CD4-positive, alpha-beta T cell (primary cell): ENCODE measurements at regions of chr9 and their contacts with region 1.

Region 1: DNA sequence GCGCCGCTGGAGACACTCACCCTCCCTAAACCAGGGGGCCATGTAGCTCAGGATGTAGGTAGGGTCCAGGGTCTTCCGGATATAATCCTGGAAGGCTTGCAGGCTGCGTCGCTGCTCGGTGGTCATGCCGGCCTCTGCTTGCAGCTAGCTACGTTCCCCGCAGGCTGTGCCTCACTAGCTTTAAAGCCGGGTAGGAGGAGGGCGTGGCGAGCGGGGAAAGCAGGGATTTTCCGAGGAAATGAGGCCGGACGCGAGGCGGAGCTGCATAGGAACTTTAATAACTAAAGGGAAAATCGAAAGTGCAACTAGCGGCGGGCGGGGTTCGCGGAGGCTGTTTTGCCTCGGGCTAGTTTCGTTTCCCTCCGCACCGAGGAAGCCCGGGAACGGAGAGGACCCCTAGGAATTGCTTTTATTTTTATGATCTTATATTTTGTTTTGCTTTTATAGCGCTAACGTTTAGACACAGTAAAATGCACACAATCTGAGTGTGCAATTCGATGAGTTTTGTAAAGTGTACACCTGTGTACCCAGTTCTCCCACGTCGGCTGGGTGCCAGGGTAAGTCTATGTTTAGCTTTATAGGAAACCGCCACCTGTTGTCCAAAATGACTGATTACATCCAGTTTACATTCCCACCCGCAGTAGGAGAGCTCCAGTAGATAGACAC is at the start of gene RIGI:
- DNase-seq: peak; percentile 56 to 93 (median 72)
- ATAC-seq: peak; percentile 82
- H3K4me3 ChIP-seq: peak within 1 kb of the TSS; percentile 91
- H3K4me3 Mint-ChIP-seq: peak within 1 kb of the TSS; percentile 96
- H3K27ac ChIP-seq: peak within 1 kb of the TSS; percentile 83 to 91
- H3K27ac Mint-ChIP-seq: peak within 1 kb of the TSS; percentile 93
- H3K4me1 ChIP-seq: peaks cover 20% of the 10 kb centered on the region
- H3K4me1 Mint-ChIP-seq: peaks cover 57% of the 10 kb centered on the region
- H3K27me3 ChIP-seq: no peaks in the 10 kb centered on the region
- H3K27me3 Mint-ChIP-seq: no peaks in the 10 kb centered on the region
- CTCF ChIP-seq: peak; percentile 72
- total RNA-seq, gene RIGI: 4.9 to 5.0 TPM

Region 2: DNA sequence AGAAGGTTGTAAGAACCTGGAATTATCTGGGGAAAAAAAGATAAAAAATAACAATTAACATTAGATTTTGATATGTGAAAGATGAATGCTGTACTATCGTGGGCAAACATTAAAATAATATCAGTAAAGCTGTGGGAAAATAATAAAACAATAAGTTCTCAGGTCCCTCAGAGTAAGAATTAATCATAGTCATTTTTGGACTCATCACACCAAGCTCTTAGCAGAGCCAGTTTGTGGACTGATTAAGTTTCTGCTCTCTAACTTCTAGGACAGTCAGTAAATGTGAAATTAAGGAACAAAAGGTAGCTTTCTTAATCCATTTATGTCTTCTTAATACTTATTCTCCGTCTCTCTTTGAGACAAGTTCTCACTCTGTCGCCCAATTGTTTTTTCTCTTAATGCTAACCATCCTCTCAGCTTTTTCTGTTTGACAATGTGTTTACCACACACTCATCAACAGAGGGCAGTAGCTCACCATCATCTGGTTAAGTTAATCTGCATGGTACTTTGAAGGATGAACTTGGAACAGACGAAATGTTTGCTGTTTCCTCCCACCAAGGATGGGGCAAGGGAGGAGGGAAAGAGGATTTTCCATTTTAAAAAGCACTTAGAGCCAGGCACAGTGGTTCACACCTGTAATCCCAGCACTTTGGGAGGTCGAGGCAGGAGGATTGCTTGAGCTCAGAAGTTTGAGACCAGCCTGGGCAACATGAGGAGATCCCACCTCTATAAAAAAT is 147.0 kb before region 1 on chr9:
- CTCF ChIA-PET with region 1: interaction called, 32 read pairs
- POLR2A ChIA-PET with region 1: interaction called, 21 read pairs
- intact Hi-C with region 1: loop called (anchors 1 to 2 kb)
- DNase-seq: peak in 12 of 14 experiments; percentile 9 to 86 (median 38)
- ATAC-seq: peak; percentile 88
- H3K4me3 ChIP-seq: no peak overlapping the region
- H3K4me3 Mint-ChIP-seq: peak overlapping the region; percentile 1
- H3K27ac ChIP-seq: no peak overlapping the region
- H3K27ac Mint-ChIP-seq: no peak overlapping the region
- H3K4me1 ChIP-seq: peaks cover 12% of the 10 kb centered on the region
- H3K4me1 Mint-ChIP-seq: peaks cover 17% of the 10 kb centered on the region
- H3K27me3 ChIP-seq: peaks cover 0 to 5% of the 10 kb centered on the region in 2 experiments
- H3K27me3 Mint-ChIP-seq: no peaks in the 10 kb centered on the region
- CTCF ChIP-seq: peak; percentile 62

Region 3: GRCh38 chr9:32431940-32432555 is 94.1 kb before region 1 on chr9:
- CTCF ChIA-PET with region 1: interaction called, 3 read pairs
- POLR2A ChIA-PET with region 1: no interaction called
- intact Hi-C with region 1: loop called in 1 of 2 experiments (anchors 5 kb)
- DNase-seq: peak; percentile 4 to 66 (median 32)
- ATAC-seq: no peak
- H3K4me3 ChIP-seq: no peak overlapping the region
- H3K4me3 Mint-ChIP-seq: no peak overlapping the region
- H3K27ac ChIP-seq: no peak overlapping the region
- H3K27ac Mint-ChIP-seq: no peak overlapping the region
- H3K4me1 ChIP-seq: no peaks in the 10 kb centered on the region
- H3K4me1 Mint-ChIP-seq: no peaks in the 10 kb centered on the region
- H3K27me3 ChIP-seq: no peaks in the 10 kb centered on the region
- H3K27me3 Mint-ChIP-seq: no peaks in the 10 kb centered on the region
- CTCF ChIP-seq: peak; percentile 65

Region 4: GRCh38 chr9:32550562-32551433 is 24.6 kb after region 1 on chr9:
- CTCF ChIA-PET with region 1: interaction called, 35 read pairs
- POLR2A ChIA-PET with region 1: interaction called, 127 read pairs
- intact Hi-C with region 1: loop called (anchors 1 to 5 kb)
- DNase-seq: peak; percentile 92 to 98 (median 95)
- ATAC-seq: peak; percentile 80
- H3K4me3 ChIP-seq: peak overlapping the region; percentile 86
- H3K4me3 Mint-ChIP-seq: peak overlapping the region; percentile 95
- H3K27ac ChIP-seq: peak overlapping the region; percentile 96 to 97
- H3K27ac Mint-ChIP-seq: peak overlapping the region; percentile 99
- H3K4me1 ChIP-seq: peaks cover 30% of the 10 kb centered on the region
- H3K4me1 Mint-ChIP-seq: peaks cover 60% of the 10 kb centered on the region
- H3K27me3 ChIP-seq: no peaks in the 10 kb centered on the region
- H3K27me3 Mint-ChIP-seq: no peaks in the 10 kb centered on the region
- CTCF ChIP-seq: peak; percentile 50

Region 5: DNA sequence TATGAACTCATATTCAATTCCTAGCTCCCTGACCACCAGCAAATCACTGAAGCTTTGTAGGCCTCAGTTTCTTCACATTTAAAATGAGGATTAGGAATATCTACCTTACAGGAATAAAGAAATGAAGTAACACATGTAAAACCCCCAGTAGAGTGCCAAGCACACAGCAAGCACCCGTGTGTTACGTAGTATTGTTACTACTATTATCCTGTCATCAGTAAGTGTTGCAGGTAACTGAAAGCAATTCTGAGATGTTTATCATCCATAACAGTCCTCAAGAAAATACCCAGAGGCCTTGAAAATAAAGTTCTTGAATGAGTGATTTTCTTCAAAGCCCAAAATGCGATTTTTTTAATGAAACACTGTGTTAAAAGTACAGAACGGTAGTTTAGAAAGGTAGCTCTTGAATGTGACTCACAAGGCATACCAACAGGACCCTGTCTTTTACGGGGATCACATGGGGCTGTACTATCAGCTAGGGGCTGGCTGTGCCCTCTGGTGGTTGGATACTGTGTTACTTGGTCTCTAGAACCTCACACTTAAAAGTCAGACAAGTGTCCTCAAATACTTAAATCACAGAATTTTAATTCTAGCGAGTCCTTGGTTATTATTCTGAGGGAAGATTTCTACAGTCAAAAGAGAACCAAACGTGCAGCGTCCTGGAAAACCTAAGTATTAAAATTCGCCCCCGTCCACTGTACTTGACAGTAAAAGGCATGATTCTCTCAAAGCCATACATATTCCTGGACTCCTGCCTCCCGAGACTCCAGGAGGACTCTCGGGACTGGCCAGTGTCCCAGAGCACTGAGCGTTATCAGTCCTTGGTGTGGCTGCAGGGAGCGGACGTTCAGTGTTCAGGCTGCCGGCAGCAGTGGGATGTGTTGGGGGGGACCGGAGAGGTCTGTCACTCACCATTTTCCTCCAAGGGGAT is 46.1 kb after region 1 on chr9:
- CTCF ChIA-PET with region 1: interaction called, 23 read pairs
- POLR2A ChIA-PET with region 1: interaction called, 38 read pairs
- intact Hi-C with region 1: loop called (anchors 1 to 2 kb)
- DNase-seq: peak; percentile 44 to 92 (median 68)
- ATAC-seq: peak; percentile 84
- H3K4me3 ChIP-seq: peak overlapping the region; percentile 74
- H3K4me3 Mint-ChIP-seq: peak overlapping the region; percentile 99
- H3K27ac ChIP-seq: peak overlapping the region; percentile 74 to 87
- H3K27ac Mint-ChIP-seq: peak overlapping the region; percentile 97
- H3K4me1 ChIP-seq: peaks cover 5% of the 10 kb centered on the region
- H3K4me1 Mint-ChIP-seq: peaks cover 42% of the 10 kb centered on the region
- H3K27me3 ChIP-seq: no peaks in the 10 kb centered on the region
- H3K27me3 Mint-ChIP-seq: no peaks in the 10 kb centered on the region
- CTCF ChIP-seq: peak; percentile 81